Natural killer cell (primary cell): ENCODE measurements at regions of chr18 and their contacts with region 1.

Region 1: DNA sequence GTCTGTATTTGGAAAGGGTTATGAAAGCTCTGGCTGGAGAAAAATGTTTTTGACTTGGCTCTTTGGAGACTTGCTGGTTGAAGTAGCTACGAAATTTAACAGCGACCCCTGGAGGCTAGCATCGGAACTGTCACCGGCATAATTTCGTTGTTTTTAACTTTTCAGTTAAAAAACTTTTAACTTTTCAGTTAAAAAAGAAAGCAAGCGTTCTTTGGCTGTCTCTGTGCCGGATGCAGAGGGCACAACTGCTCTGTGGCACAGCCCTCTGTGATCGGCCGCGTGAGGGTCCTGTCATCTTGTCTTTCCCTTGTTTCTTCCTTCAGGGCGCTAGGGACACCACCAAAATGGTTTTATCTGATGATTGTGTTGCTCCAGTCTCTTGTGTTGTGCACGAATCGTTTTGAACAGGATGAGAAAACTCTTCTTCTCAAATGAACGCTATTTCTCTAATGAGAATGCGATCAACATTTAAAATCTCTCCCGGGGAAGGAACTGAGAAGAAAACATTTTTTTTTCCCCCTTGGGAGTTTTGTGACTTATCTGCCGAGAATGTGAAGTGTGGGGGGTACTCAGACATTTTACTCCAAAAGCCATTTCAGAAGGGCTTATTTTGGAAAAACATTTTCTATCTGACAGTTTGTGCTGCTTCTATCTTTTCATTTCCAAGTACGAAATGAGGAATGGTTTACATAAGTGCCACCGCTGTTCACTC is 57.1 kb downstream of the ADCYAP1 start:
- DNase-seq: peak; percentile 24 to 62
- ATAC-seq: peak in 1 of 3 donors; percentile 54
- H3K4me3 ChIP-seq: no peak overlapping the region
- H3K4me3 Mint-ChIP-seq: no peak overlapping the region
- H3K27ac ChIP-seq: no peak overlapping the region
- H3K27ac Mint-ChIP-seq: no peak overlapping the region
- H3K4me1 ChIP-seq: peaks cover 3% of the 10 kb centered on the region
- H3K4me1 Mint-ChIP-seq: peaks cover 0 to 8% of the 10 kb centered on the region in 2 donors
- H3K27me3 ChIP-seq: no peaks in the 10 kb centered on the region
- H3K27me3 Mint-ChIP-seq: peaks cover 10 to 31% of the 10 kb centered on the region in 2 donors
- CTCF ChIP-seq: peak; percentile 92

Region 2: DNA sequence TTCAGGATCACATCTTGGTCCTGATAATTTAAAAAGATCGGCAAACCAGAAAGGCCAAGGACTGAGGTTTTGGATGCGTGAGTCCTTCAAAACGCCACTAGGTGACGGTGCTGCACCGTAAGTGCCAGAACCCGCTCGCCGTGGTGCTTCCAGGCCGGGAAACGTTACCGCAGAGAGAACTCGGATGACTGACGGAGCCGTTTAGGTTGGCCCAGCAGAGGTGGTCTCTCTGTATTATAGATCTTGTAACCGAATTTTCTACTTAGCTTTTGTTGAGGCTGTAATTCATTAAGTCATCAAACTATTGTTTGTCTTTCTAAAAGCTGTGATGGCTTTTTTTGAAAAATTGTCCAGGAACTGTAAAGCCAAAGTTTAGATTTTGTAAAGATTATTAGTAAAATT is 96.9 kb before region 1 on chr18:
- intact Hi-C with region 1: loop called (anchors 1 kb)
- DNase-seq: peak; percentile 44 to 81
- ATAC-seq: peak; percentile 74 to 92 (median 90)
- H3K4me3 ChIP-seq: no peak overlapping the region
- H3K4me3 Mint-ChIP-seq: no peak overlapping the region
- H3K27ac ChIP-seq: no peak overlapping the region
- H3K27ac Mint-ChIP-seq: no peak overlapping the region
- H3K4me1 ChIP-seq: no peaks in the 10 kb centered on the region
- H3K4me1 Mint-ChIP-seq: no peaks in the 10 kb centered on the region
- H3K27me3 ChIP-seq: no peaks in the 10 kb centered on the region
- H3K27me3 Mint-ChIP-seq: peaks cover 8 to 27% of the 10 kb centered on the region in 2 donors
- CTCF ChIP-seq: peak; percentile 97